ENCODE measurements at regions of chr12 and their contacts with region 1.

Region 1: DNA sequence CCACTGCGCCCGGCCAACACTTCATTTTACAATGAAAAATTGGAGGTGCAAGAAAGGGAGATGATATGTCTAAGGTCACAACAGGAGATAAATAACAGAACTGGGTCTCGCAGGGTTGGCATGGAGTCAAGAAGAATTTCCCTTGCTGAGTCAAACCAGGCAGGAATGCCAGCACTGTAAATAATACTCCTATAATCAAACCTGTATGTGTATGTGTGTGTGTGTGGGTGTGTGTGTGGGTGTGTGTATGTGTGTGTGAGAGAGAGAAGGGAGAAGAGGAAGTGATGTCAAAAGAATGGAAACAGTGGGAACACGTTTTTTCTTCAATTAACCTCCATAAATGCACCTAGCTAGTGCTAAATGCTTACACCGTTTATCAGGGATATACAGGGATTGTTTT is 70.4 kb downstream of the TMEM116 start:
- DNase-seq: peak; percentile 76
- H3K4me3 ChIP-seq: no peak overlapping the region
- H3K27ac ChIP-seq: no peak overlapping the region
- H3K4me1 ChIP-seq: peaks cover 2% of the 10 kb centered on the region
- H3K27me3 ChIP-seq: no peaks in the 10 kb centered on the region
- CTCF ChIP-seq: no peak
- POLR2A ChIP-seq: no peak

Region 2: GRCh38 chr12:111932241-111932640 is 10.3 kb before region 1 on chr12:
- CTCF ChIA-PET with region 1: interaction called, 11 read pairs
- POLR2A ChIA-PET with region 1: no interaction called
- dilution Hi-C with region 1: no loop called
- intact Hi-C with region 1: no loop called
- DNase-seq: no peak
- H3K4me3 ChIP-seq: no peak overlapping the region
- H3K27ac ChIP-seq: no peak overlapping the region
- H3K4me1 ChIP-seq: no peaks in the 10 kb centered on the region
- H3K27me3 ChIP-seq: no peaks in the 10 kb centered on the region
- CTCF ChIP-seq: no peak
- POLR2A ChIP-seq: no peak

Region 3: DNA sequence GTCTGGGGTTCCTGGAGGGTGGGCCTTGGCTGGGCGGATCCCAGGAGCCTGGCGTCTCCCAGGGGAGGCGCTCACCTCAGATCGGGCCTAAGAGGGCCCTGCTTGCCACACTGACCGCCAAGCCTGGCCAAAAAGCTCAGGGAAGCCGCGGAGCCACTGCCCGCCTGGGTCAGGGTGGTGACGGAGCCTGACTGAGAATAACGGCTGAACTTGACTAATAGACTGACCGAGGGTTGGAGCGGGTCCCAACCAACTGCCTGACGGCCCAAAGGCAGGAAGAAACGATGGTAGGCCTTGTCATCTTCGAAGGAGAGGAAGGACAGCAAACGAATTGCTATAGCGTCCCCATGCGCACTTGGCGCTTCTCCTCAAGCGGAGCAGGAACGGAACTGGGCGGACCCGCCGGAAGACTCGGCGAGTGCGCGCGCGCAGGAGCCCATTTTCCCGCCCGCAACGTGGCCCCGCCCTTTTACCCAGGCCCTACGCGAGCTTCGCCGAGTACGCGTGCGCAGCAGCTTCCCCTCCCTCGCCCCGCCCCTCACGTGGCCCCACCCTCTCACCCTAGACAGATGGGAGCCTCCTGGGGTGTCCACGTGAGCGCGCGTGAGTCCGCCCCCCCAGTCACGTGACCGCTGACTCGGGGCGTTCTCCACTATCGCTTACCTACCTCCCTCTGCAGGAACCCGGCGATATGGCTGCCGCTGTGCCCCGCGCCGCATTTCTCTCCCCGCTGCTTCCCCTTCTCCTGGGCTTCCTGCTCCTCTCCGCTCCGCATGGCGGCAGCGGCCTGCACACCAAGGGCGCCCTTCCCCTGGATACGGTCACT is 70.4 kb after region 1 on chr12 and contains the starts of genes ERP29 and TMEM116:
- CTCF ChIA-PET with region 1: interaction called, 21 read pairs
- POLR2A ChIA-PET with region 1: no interaction called
- dilution Hi-C with region 1: no loop called
- intact Hi-C with region 1: loop called (anchors 2 kb)
- DNase-seq: peak; percentile 100
- H3K4me3 ChIP-seq: peak within 1 kb of the TSS; percentile 72 to 81 (median 77)
- H3K27ac ChIP-seq: peak within 1 kb of the TSS; percentile 57
- H3K4me1 ChIP-seq: peaks cover 26% of the 10 kb centered on the region
- H3K27me3 ChIP-seq: no peaks in the 10 kb centered on the region
- CTCF ChIP-seq: peak; percentile 42 to 55
- POLR2A ChIP-seq: peak; percentile 99
- total RNA-seq, gene ERP29: 108 and 116 TPM in 2 replicates
- total RNA-seq, gene TMEM116: 1.6 TPM in 2 replicates

Region 4: DNA sequence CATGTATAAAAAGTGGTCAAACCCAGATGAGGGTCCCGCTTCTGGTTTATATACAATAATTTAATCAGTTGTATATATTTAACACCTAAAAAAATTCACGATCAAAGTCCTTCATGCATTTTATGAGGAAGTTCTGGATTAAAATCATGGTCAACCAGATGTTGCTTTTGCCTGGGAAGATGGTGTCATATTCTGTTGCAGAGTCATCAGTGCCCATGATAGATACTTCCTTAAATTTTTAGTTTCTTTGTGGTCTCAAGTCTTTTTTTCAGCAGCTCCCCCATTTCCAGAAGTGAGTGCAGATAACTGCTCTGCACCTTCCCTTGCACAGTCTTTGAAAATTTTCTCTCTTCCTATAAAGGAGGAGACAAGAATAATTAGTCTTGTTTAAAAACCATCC is 86.7 kb after region 1 on chr12:
- CTCF ChIA-PET with region 1: interaction called, 10 read pairs
- POLR2A ChIA-PET with region 1: no interaction called
- dilution Hi-C with region 1: no loop called
- intact Hi-C with region 1: no loop called
- DNase-seq: no peak
- H3K4me3 ChIP-seq: no peak overlapping the region
- H3K27ac ChIP-seq: no peak overlapping the region
- H3K4me1 ChIP-seq: peaks cover 10% of the 10 kb centered on the region
- H3K27me3 ChIP-seq: no peaks in the 10 kb centered on the region
- CTCF ChIP-seq: no peak
- POLR2A ChIP-seq: no peak

Region 5: DNA sequence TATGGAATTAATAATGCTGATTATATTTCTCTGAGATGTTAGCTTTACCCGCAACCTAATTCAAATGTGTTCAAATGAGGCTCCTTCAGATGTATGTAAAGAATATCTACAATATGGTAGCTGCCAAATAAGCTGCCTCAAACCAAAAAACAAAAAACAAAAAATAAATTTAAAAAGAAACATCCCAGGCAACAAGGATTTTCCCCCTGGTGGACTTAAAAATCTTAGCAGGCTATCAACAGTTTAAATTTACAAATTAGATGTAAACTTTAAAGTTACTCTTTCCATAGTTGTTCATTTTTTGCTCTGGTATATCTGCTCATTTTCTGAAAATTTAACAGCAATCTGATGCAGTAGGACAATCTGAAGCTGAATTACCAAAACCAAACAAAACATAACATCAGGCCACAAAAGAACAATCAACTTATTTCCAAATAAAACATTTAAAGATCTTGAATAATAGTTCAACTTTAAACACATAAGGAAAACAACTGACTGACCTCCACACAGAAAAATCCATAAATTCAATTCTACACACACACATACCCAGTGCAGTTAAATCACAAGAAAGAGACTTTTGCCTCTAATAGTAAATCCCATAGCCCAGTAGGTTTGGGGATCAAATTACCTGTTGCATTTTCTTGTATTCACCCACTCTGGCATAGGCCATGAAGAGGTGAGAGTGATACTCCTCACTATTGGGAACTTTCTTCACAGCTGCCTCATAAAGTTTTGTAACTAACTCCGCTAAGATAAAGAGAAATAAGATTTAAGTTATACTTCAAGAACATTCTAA is 144.7 kb after region 1 on chr12:
- CTCF ChIA-PET with region 1: interaction called, 23 read pairs
- POLR2A ChIA-PET with region 1: no interaction called
- dilution Hi-C with region 1: no loop called
- intact Hi-C with region 1: loop called (anchors 10 kb)
- DNase-seq: no peak
- H3K4me3 ChIP-seq: no peak overlapping the region
- H3K27ac ChIP-seq: no peak overlapping the region
- H3K4me1 ChIP-seq: peaks cover 7% of the 10 kb centered on the region
- H3K27me3 ChIP-seq: no peaks in the 10 kb centered on the region
- CTCF ChIP-seq: no peak
- POLR2A ChIP-seq: no peak

Region 6: DNA sequence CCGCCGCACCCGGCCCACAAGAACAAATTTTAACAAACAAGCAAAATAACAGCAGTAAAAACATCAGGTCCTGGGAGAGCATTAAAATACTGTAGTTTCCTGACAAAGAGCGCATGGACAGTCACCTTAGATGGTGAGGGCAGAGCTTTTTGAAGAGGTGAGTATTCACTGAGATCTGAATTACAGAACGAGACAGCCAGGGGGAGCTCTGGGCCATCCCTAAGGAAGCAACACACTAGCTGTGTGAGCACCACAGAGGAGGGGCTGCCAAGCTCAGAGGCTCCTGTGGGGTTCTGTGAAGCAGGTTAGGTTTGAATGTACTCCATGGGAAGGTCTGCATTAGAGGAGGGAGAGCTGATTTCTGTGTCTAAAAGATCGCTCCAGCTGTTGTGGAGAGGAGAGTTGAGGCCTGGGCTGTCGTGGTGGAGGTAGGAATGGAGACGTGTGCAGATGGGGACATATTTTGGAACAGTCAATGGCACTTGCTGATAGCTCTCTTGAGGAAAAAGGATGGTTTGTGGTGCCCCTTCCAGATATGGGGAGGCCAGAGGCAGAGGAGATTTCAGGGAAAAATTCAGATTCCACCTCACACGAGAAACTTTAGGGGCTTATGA is 255.7 kb after region 1 on chr12:
- CTCF ChIA-PET with region 1: interaction called, 10 read pairs
- POLR2A ChIA-PET with region 1: no interaction called
- dilution Hi-C with region 1: no loop called
- intact Hi-C with region 1: no loop called
- DNase-seq: peak; percentile 59
- H3K4me3 ChIP-seq: no peak overlapping the region
- H3K27ac ChIP-seq: no peak overlapping the region
- H3K4me1 ChIP-seq: no peaks in the 10 kb centered on the region
- H3K27me3 ChIP-seq: no peaks in the 10 kb centered on the region
- CTCF ChIP-seq: peak; percentile 47 to 72
- POLR2A ChIP-seq: no peak

Region 7: DNA sequence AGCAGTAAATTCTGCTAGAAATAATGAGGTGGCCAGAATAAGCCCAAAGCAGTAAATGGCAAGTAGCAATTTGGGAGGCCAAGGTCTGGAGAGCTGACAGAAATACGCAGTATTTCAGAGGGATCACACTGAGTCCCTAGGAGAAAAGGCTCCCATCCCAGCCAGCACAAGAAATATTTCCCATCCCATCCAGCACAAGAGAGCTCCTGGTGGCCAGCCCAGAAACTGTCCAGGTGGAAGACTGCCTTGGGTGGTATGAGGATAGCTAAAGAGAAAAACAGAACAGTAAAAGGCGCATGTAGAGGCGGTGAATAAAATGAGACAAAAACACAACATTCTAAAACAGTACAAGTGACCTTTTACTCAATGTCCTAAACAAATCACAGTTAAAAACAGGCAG is 319.0 kb after region 1 on chr12:
- CTCF ChIA-PET with region 1: no interaction called
- POLR2A ChIA-PET with region 1: no interaction called
- dilution Hi-C with region 1: no loop called
- intact Hi-C with region 1: no loop called
- DNase-seq: no peak
- H3K4me3 ChIP-seq: no peak overlapping the region
- H3K27ac ChIP-seq: no peak overlapping the region
- H3K4me1 ChIP-seq: no peaks in the 10 kb centered on the region
- H3K27me3 ChIP-seq: no peaks in the 10 kb centered on the region
- CTCF ChIP-seq: peak; percentile 11 to 19
- POLR2A ChIP-seq: no peak

Region 8: DNA sequence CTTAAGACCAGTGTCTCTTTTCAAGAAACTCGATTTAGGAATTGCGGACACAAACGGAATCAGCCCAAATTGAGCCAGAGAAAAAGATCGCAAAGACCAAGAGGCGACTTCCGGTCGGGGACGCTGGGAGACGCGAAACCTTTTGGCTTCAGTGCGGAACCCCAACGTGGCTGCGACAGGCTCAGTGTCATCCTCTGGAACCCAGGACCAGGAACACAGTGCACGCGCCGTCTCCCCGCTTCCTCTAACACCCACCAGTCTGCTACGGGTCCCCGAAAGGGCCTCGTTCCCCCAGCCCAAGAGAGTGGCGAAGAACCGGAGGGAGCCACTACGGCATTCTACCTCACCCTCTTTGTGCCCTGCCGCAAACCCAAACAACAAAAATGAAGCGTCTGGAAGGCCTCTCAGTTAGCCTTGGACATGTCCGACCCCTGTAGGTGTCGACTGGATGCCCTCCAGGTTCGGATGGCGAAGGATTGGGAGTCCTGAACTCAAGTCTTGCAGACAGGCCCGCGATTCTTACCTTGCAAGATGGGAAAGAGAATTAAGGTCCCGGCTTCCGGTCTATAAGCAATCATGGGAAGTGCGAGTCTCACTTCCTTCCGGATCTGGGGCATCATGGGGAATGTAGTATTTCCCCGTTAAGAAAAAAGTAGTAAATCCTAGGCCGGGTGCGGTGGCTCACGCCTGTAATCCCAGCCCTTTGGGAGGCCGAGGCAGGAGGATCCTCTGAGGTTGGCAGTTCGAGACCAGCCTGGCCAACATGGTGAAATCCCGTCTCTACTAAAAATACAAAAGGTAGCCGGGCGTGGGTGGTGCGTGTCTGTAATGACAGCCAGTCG is 466.7 kb after region 1 on chr12 and contains the start of gene RPL6:
- CTCF ChIA-PET with region 1: interaction called, 12 read pairs
- POLR2A ChIA-PET with region 1: no interaction called
- dilution Hi-C with region 1: no loop called
- intact Hi-C with region 1: loop called (anchors 2 kb)
- DNase-seq: peak; percentile 93
- H3K4me3 ChIP-seq: peak within 1 kb of the TSS; percentile 63 to 91 (median 89)
- H3K27ac ChIP-seq: peak within 1 kb of the TSS; percentile 77
- H3K4me1 ChIP-seq: peaks cover 20% of the 10 kb centered on the region
- H3K27me3 ChIP-seq: peaks cover 0 to 4% of the 10 kb centered on the region in 2 experiments
- CTCF ChIP-seq: no peak
- POLR2A ChIP-seq: peak; percentile 99
- total RNA-seq, gene RPL6: 1,359 and 1,385 TPM in 2 replicates

Measured in endothelial cell of umbilical vein (primary cell).